ENCODE measurements at regions of chr1 and their contacts with region 1.

Region 1: GRCh38 chr1:67766141-67766978 is 66.9 kb downstream of the GNG12 start:
- DNase-seq: peak; percentile 35
- H3K4me3 ChIP-seq: peak overlapping the region; percentile 6 to 49; a peak in 3 of 4 replicates
- H3K27ac ChIP-seq: peak overlapping the region in 1 of 2 experiments; percentile 85; a peak in 3 of 4 replicates
- H3K4me1 ChIP-seq: peaks cover 8 to 13% of the 10 kb centered on the region in 2 experiments; a peak in 3 of 4 replicates
- H3K27me3 ChIP-seq: no peaks in the 10 kb centered on the region
- CTCF ChIP-seq: peak; percentile 91
- EP300 ChIP-seq: no peak
- RAD21 ChIP-seq: peak; percentile 82

Region 2: DNA sequence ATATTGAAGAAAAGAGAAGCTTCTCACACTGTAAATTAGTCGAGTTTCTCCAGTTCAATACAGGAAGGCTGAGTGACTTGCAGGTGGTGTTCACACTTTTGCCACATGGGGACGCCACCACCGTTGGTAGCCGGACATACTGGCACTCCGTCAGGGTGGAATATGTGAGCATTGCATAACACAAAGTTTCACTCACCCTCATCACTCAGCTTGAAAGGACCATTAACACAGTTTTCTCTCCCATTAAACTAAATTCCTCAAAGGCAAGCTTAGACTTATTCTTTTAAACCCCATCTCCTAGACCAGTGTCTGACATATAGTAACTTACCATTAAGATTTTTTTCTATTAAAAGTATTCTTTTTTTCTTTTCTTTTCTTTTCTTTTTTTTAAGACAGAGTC is 230.9 kb before region 1 on chr1:
- CTCF ChIA-PET with region 1: interaction called, 284 read pairs
- POLR2A ChIA-PET with region 1: no interaction called
- DNase-seq: peak; percentile 69
- H3K4me3 ChIP-seq: no peak overlapping the region
- H3K27ac ChIP-seq: no peak overlapping the region
- H3K4me1 ChIP-seq: no peaks in the 10 kb centered on the region; a peak in 1 of 4 replicates
- H3K27me3 ChIP-seq: no peaks in the 10 kb centered on the region
- CTCF ChIP-seq: peak; percentile 99
- EP300 ChIP-seq: no peak
- RAD21 ChIP-seq: peak; percentile 87

Region 3: GRCh38 chr1:67719329-67720196 is 46.8 kb before region 1 on chr1:
- CTCF ChIA-PET with region 1: no interaction called
- POLR2A ChIA-PET with region 1: no interaction called
- DNase-seq: no peak
- H3K4me3 ChIP-seq: no peak overlapping the region
- H3K27ac ChIP-seq: no peak overlapping the region
- H3K4me1 ChIP-seq: peaks cover 48 to 51% of the 10 kb centered on the region in 2 experiments
- H3K27me3 ChIP-seq: no peaks in the 10 kb centered on the region
- CTCF ChIP-seq: no peak
- EP300 ChIP-seq: no peak
- RAD21 ChIP-seq: no peak

Region 4: DNA sequence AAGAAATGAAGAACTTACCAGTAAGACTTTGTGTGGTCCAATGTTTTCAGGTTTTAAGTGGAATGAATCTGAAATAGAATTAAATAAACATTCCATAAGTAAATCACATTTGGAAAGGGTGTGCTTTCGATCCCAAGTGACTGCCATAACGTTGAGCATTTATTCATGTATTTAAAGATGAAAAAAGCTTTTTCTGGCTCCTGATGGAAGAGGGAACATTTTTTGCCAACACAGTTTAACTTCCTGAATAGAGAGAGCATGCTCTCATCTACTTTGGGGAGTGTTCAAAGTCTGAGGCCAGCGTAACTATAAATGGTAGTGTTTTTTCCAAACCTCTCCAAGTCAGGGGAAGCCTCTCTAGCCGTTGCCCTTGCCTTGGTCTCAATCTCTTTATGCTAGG is 11.1 kb after region 1 on chr1:
- CTCF ChIA-PET with region 1: interaction called, 30 read pairs
- POLR2A ChIA-PET with region 1: no interaction called
- DNase-seq: no peak
- H3K4me3 ChIP-seq: no peak overlapping the region
- H3K27ac ChIP-seq: no peak overlapping the region
- H3K4me1 ChIP-seq: peaks cover 0 to 2% of the 10 kb centered on the region in 2 experiments; a peak in 1 of 4 replicates
- H3K27me3 ChIP-seq: no peaks in the 10 kb centered on the region
- CTCF ChIP-seq: no peak
- EP300 ChIP-seq: no peak
- RAD21 ChIP-seq: no peak

Region 5: DNA sequence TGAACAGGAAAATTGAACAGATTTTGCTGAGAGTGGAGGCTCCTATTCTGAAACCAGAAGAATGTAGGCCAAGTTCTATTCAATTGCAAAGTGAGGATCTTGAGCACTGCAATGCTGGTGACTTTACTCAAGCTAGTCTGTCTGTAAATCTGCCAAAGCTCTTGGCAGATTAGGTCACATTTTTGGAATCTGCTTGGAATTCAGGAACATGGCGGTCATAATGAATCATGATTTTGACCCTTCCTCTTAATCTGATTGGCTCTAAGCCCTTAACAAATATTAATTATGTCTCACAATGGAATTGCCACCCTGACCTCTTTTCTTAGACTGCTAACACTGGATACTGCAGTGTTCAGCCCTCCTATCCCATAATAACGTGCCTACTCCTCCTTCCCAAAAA is 74.1 kb after region 1 on chr1:
- CTCF ChIA-PET with region 1: interaction called, 60 read pairs
- POLR2A ChIA-PET with region 1: no interaction called
- DNase-seq: no peak
- H3K4me3 ChIP-seq: no peak overlapping the region
- H3K27ac ChIP-seq: peak overlapping the region in 1 of 2 experiments; percentile 72; a peak in 2 of 4 replicates
- H3K4me1 ChIP-seq: peaks cover 7 to 48% of the 10 kb centered on the region in 2 experiments
- H3K27me3 ChIP-seq: no peaks in the 10 kb centered on the region
- CTCF ChIP-seq: no peak
- EP300 ChIP-seq: peak in 1 of 2 experiments; percentile 88; a peak in 2 of 4 replicates
- RAD21 ChIP-seq: no peak

Region 6: DNA sequence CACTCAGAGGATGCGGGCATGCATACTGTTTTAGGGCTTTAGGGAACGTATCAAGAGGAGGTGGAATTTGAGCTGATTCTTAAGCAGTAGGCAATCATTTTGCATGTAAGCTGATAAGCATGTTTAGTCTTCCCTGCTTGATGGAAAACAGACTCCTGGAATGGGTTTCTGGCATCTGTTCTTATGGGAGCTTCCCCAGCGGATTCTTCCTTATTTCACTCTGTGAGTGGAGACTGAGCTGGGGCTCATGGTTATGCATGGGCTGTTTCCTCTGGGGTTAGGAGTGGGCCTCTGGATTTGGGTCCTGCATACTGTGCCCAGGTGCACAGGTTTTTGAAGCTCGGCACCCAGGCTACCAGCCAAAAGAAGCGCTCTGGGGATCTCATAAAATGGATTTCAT is 190.7 kb after region 1 on chr1:
- CTCF ChIA-PET with region 1: no interaction called
- POLR2A ChIA-PET with region 1: no interaction called
- DNase-seq: peak; percentile 48
- H3K4me3 ChIP-seq: no peak overlapping the region
- H3K27ac ChIP-seq: peak overlapping the region in 1 of 2 experiments; percentile 86; a peak in 2 of 4 replicates
- H3K4me1 ChIP-seq: peaks cover 0 to 11% of the 10 kb centered on the region in 2 experiments; a peak in 2 of 4 replicates
- H3K27me3 ChIP-seq: no peaks in the 10 kb centered on the region
- CTCF ChIP-seq: no peak
- EP300 ChIP-seq: peak; percentile 48 to 64; a peak in 2 of 4 replicates
- RAD21 ChIP-seq: peak; percentile 8; the same call in 1 of the 2 replicates

Region 7: DNA sequence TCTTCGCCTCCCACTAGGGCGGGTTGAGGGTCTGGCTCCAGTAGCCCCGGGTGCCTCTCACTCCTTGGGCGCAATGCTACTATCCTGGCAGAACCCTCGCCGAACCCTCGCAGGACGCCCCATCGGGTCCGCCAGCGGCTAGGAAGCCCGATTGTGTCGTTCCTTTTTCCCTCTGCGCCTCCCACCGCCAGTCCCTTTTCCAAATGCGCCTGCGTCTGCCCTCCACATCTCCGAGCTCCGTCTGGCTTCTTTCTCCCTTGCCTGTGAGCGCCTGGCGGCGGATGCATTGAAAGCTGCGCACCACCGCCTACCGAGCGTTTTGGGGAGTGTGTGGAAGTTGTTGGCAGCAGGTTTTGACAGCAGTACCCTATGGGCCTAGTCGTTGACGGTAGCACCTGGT is 285.1 kb after region 1 on chr1:
- CTCF ChIA-PET with region 1: interaction called, 10 read pairs
- POLR2A ChIA-PET with region 1: no interaction called
- DNase-seq: peak; percentile 78
- H3K4me3 ChIP-seq: peak overlapping the region; percentile 43 to 68
- H3K27ac ChIP-seq: peak overlapping the region in 1 of 2 experiments; percentile 36; a peak in 1 of 4 replicates
- H3K4me1 ChIP-seq: no peaks in the 10 kb centered on the region; a peak in 1 of 4 replicates
- H3K27me3 ChIP-seq: no peaks in the 10 kb centered on the region
- CTCF ChIP-seq: peak; percentile 58
- EP300 ChIP-seq: no peak
- RAD21 ChIP-seq: peak; percentile 77